Heart left ventricle (tissue), 16 donors: ENCODE measurements at regions of chr2 and their contacts with region 1.

Region 1: GRCh38 chr2:231604685-231605606 is 12.3 kb downstream of the TEX44 start:
- DNase-seq: peak; percentile 99 to 100 (median 100)
- ATAC-seq: peak; percentile 92 to 95 (median 93)
- H3K4me3 ChIP-seq: peak overlapping the region in 11 of 12 donors; percentile 46 to 72 (median 63)
- H3K27ac ChIP-seq: peak overlapping the region; percentile 95 to 100 (median 98)
- H3K4me1 ChIP-seq: peaks cover 7 to 52% (median 28%) of the 10 kb centered on the region in 12 donors
- H3K27me3 ChIP-seq: no peaks in the 10 kb centered on the region
- CTCF ChIP-seq: peak in 3 of 12 donors; percentile 25 to 31 (median 26)
- POLR2A ChIP-seq: peak in 1 of 2 donors; percentile 74

Region 2: DNA sequence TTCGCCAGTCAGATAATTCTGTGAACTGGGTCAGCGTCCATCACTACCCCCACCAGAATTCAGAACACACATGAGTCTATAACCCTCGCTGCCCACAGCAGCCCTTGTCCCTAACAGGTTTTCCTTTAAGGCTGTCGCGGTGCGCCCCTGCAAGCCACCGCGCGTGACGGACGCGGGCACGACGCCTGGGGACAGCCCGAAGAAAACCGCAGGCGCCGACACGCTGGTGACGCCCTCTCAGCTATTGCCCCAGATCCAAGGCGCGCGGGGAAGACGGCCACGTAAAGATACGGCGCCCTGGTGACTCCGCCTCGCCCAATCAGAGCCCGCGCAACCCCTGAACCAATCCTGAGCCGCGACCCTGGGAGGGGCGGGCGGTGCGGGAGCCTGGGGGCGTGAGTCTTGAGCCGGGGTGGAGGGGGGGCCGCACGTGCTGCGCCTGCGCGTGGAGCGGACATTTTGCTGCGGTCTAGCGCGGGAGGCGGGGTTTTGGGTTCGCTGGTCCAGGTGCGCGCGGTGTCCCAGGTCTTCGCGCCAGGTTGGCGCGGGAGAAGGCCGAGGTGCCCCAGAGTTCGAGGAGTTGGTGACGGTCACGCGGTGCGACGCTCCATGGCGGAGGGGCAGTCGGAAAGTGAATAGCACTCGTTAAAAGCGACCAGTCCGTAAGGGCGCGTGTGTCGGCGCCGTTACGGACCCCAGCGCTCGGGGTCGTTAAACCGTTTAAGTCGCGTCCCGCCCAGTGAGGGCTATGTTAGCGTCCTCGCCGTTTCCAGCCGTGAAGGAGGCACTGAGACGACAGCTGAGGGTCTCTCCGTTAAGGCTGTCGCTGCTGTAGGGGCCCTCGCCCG is 90.6 kb before region 1 on chr2:
- intact Hi-C with region 1: loop called in 7 of 10 experiments (anchors 1 to 5 kb)
- DNase-seq: peak; percentile 98 to 99 (median 99)
- ATAC-seq: peak; percentile 99 to 100 (median 100)
- H3K4me3 ChIP-seq: peak overlapping the region; percentile 56 to 89 (median 76)
- H3K27ac ChIP-seq: peak overlapping the region; percentile 48 to 92 (median 86)
- H3K4me1 ChIP-seq: peaks cover 0 to 19% (median 7%) of the 10 kb centered on the region in 12 donors
- H3K27me3 ChIP-seq: no peaks in the 10 kb centered on the region
- CTCF ChIP-seq: no peak
- POLR2A ChIP-seq: peak in 1 of 2 donors; percentile 90

Region 3: GRCh38 chr2:231563378-231563961 is 41.5 kb before region 1 on chr2:
- intact Hi-C with region 1: loop called (anchors 1 to 5 kb)
- DNase-seq: peak; percentile 38 to 63 (median 50)
- ATAC-seq: peak in 3 of 4 donors; percentile 84 to 85 (median 84)
- H3K4me3 ChIP-seq: no peak overlapping the region
- H3K27ac ChIP-seq: no peak overlapping the region
- H3K4me1 ChIP-seq: no peaks in the 10 kb centered on the region
- H3K27me3 ChIP-seq: no peaks in the 10 kb centered on the region
- CTCF ChIP-seq: peak; percentile 40 to 82 (median 62)
- POLR2A ChIP-seq: no peak

Region 4: GRCh38 chr2:231780909-231781797 is 176.2 kb after region 1 on chr2 and contains the start of gene PDE6D:
- intact Hi-C with region 1: loop called in 4 of 10 experiments (anchors 5 to 10 kb)
- DNase-seq: peak; percentile 98 to 100 (median 99)
- ATAC-seq: peak; percentile 95 to 97 (median 96)
- H3K4me3 ChIP-seq: peak within 1 kb of the TSS; percentile 59 to 95 (median 87)
- H3K27ac ChIP-seq: peak within 1 kb of the TSS; percentile 54 to 93 (median 90)
- H3K4me1 ChIP-seq: peaks cover 0 to 53% (median 30%) of the 10 kb centered on the region in 12 donors
- H3K27me3 ChIP-seq: no peaks in the 10 kb centered on the region
- CTCF ChIP-seq: no peak
- POLR2A ChIP-seq: peak; percentile 96 to 99
- total RNA-seq, gene PDE6D: 12.3 to 29.1 (median 19.5) TPM